ENCODE measurements at regions of chr12 and their contacts with region 1.

Region 1: DNA sequence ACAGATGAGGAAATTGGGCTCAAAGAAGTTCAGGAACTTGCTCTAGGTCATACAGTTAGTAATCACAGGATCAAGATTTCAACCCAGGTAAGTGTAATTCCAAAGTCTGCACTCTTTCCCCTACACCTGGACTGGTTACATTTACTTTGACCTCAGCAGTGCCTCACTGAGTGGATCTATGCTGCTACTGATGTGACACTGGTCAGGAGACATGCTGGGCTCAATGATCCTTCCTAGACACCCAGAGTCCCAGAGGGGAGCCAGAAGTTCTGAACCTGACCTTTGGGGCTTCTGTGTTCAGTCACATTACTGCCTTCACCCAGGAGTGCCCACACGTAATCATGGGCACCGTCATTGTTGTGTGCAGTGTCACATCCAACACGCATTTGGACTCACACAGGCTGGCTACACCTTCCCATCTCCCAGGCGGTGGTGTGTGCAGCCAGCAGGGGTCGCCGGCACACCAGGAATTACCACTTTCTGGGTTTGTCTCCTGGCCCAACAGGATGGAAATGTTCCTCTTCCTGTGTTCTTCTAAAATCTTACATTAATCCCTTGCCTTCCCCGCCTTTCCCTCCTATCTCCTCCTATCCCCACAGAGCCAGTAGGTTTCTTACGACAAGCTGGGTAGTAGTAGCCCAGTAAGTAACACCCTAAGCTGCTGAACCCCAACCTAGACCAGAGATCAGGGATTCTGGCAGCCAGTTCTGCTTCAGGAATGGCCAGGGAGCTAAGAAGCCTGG is 25.6 kb downstream of the CALCOCO1 start:
- DNase-seq: peak; percentile 81
- ATAC-seq: peak; percentile 90
- H3K4me3 Mint-ChIP-seq: no peak overlapping the region
- H3K27ac Mint-ChIP-seq: no peak overlapping the region
- H3K4me1 Mint-ChIP-seq: peaks cover 4% of the 10 kb centered on the region
- H3K27me3 Mint-ChIP-seq: peaks cover 91% of the 10 kb centered on the region

Region 2: GRCh38 chr12:53652366-53652765 is 49.3 kb before region 1 on chr12:
- CTCF ChIA-PET with region 1: no interaction called
- DNase-seq: no peak
- ATAC-seq: no peak
- H3K4me3 Mint-ChIP-seq: no peak overlapping the region
- H3K27ac Mint-ChIP-seq: no peak overlapping the region
- H3K4me1 Mint-ChIP-seq: no peaks in the 10 kb centered on the region
- H3K27me3 Mint-ChIP-seq: no peaks in the 10 kb centered on the region

Region 3: DNA sequence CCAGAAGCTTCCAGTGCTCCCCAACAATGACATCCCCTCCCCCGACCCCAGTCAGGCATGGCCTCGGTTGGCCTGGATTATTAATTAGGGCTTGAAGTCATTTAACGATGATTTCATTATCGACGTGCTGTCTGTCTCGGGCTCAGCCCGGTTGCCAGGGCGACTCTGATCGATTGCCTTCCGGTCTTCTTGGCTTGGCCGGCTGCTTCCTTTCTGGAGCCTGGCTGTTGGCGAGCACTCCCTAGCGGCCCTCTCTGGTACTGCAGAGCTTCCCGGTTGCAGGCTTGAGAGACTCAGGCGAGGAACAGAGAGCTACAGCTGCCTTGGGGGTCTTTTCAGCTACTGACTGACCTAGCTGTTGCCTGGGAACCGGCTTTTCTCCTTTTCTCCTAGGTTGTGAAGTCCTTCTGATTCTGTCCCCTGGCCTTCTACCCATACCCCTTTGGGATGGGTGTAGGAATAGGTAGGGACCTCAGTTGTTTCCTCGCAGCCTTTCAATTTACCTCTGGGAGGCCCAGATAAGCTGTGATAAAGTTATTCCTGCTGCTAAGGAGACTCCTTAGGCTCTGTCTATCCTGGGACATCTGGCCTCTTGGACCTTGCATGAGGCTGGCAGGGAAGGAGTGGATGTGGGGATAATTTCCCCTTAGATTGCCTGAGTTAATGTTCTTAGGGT is 55.5 kb after region 1 on chr12:
- CTCF ChIA-PET with region 1: interaction called, 22 read pairs
- DNase-seq: peak; percentile 92
- ATAC-seq: peak; percentile 93
- H3K4me3 Mint-ChIP-seq: peak overlapping the region; percentile 52
- H3K27ac Mint-ChIP-seq: peak overlapping the region; percentile 70
- H3K4me1 Mint-ChIP-seq: peaks cover 19% of the 10 kb centered on the region
- H3K27me3 Mint-ChIP-seq: peaks cover 40% of the 10 kb centered on the region

Region 4: GRCh38 chr12:53820516-53821306 is 119.0 kb after region 1 on chr12:
- CTCF ChIA-PET with region 1: no interaction called
- DNase-seq: no peak
- ATAC-seq: no peak
- H3K4me3 Mint-ChIP-seq: no peak overlapping the region
- H3K27ac Mint-ChIP-seq: no peak overlapping the region
- H3K4me1 Mint-ChIP-seq: no peaks in the 10 kb centered on the region
- H3K27me3 Mint-ChIP-seq: peaks cover 81% of the 10 kb centered on the region